ENCODE measurements at regions of chr1 and their contacts with region 1.

Region 1: GRCh38 chr1:226711976-226712741 is 26.9 kb downstream of the ITPKB start:
- DNase-seq: peak in 8 of 9 experiments; percentile 40 to 83 (median 67)
- ATAC-seq: peak; percentile 55
- H3K4me3 ChIP-seq: peak overlapping the region; percentile 21 to 36
- H3K4me3 Mint-ChIP-seq: peak overlapping the region; percentile 65
- H3K27ac ChIP-seq: peak overlapping the region; percentile 35 to 76
- H3K27ac Mint-ChIP-seq: peak overlapping the region; percentile 93
- H3K4me1 ChIP-seq: peaks cover 96% of the 10 kb centered on the region
- H3K4me1 Mint-ChIP-seq: peaks cover 98% of the 10 kb centered on the region
- H3K27me3 ChIP-seq: no peaks in the 10 kb centered on the region
- H3K27me3 Mint-ChIP-seq: no peaks in the 10 kb centered on the region
- CTCF ChIP-seq: no peak

Region 2: DNA sequence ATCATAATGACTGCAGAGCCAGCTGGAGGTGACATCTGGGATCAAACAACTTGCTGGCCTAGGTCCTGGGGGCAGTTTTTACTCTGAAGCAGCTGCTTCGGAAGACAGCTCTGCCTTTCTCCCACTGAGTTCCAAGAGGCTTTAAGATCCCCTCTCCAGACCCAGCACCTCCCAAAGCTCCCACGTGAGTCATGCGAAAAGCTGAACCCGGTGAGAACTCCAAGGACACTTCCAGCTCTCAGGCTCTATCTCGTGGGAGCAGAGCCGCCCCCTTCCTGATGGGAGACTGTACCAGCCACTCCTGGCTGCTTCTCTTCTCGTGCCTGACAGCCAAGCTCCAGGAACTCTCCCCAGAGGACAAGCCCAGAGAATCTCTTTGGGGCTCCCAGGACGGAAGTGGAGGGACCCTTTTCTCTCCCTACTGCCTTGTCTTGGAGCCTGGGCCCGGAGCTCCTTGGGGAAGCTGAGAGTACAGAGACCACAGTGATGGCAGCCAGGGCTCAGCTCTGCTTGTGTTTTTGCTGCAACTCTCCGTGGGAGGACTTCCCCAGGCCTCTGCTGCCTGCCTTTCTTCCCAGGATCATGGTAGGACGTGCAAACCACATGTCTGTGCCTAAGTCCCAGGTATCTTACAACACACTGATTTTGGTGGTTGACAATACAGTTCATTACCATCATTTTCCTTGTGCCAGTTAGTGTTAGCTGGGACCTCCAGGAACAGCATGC is 123.0 kb before region 1 on chr1:
- CTCF ChIA-PET with region 1: no interaction called
- POLR2A ChIA-PET with region 1: no interaction called
- intact Hi-C with region 1: no loop called
- DNase-seq: no peak
- ATAC-seq: no peak
- H3K4me3 ChIP-seq: no peak overlapping the region
- H3K4me3 Mint-ChIP-seq: no peak overlapping the region
- H3K27ac ChIP-seq: no peak overlapping the region
- H3K27ac Mint-ChIP-seq: no peak overlapping the region
- H3K4me1 ChIP-seq: no peaks in the 10 kb centered on the region
- H3K4me1 Mint-ChIP-seq: no peaks in the 10 kb centered on the region
- H3K27me3 ChIP-seq: no peaks in the 10 kb centered on the region
- H3K27me3 Mint-ChIP-seq: peaks cover 8% of the 10 kb centered on the region
- CTCF ChIP-seq: no peak

Region 3: DNA sequence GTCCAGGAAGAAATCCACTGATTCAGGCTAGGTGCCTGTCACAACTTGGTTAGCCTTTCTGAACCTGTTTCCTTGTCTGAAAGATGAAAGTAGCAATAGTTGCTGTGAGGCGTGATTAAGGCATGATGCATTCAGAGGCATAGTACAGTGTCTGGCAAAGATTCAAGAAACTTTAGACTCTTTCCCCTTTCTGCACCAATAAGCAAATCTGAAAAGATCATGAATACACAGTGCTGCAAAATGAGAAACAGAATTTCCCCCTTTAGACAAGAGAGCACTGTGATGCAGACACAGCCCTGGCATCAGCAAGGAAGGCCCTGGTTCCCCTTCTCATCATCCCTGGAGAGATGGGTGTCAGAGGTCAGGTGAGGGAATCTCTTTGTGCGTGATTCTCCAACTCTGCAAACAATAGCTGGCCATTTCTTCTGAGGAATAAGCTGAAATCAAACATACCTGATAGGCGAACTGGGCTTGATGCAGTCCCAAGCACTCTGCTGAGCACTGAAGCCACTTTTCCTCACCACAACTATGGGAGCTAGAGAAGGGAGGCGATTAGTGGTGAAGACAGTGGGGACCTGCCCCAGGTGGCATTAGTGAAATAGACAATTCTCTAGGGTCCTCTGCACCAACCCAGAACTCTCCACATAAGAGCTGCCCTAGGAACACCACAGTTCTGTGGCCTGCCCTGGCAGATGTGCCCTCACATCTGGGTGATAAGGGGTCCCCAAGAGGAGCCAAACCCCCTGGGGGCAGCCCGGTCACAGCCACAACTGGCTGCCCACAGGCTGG is 14.8 kb before region 1 on chr1:
- CTCF ChIA-PET with region 1: interaction called, 12 read pairs
- POLR2A ChIA-PET with region 1: interaction called, 3 read pairs
- intact Hi-C with region 1: loop called in 1 of 2 experiments (anchors 2 kb)
- DNase-seq: peak in 4 of 9 experiments; percentile 44 to 80 (median 52)
- ATAC-seq: peak; percentile 76
- H3K4me3 ChIP-seq: no peak overlapping the region
- H3K4me3 Mint-ChIP-seq: peak overlapping the region; percentile 59
- H3K27ac ChIP-seq: peak overlapping the region; percentile 29 to 57
- H3K27ac Mint-ChIP-seq: peak overlapping the region; percentile 98
- H3K4me1 ChIP-seq: peaks cover 97% of the 10 kb centered on the region
- H3K4me1 Mint-ChIP-seq: peaks cover 92% of the 10 kb centered on the region
- H3K27me3 ChIP-seq: no peaks in the 10 kb centered on the region
- H3K27me3 Mint-ChIP-seq: no peaks in the 10 kb centered on the region
- CTCF ChIP-seq: no peak

Region 4: DNA sequence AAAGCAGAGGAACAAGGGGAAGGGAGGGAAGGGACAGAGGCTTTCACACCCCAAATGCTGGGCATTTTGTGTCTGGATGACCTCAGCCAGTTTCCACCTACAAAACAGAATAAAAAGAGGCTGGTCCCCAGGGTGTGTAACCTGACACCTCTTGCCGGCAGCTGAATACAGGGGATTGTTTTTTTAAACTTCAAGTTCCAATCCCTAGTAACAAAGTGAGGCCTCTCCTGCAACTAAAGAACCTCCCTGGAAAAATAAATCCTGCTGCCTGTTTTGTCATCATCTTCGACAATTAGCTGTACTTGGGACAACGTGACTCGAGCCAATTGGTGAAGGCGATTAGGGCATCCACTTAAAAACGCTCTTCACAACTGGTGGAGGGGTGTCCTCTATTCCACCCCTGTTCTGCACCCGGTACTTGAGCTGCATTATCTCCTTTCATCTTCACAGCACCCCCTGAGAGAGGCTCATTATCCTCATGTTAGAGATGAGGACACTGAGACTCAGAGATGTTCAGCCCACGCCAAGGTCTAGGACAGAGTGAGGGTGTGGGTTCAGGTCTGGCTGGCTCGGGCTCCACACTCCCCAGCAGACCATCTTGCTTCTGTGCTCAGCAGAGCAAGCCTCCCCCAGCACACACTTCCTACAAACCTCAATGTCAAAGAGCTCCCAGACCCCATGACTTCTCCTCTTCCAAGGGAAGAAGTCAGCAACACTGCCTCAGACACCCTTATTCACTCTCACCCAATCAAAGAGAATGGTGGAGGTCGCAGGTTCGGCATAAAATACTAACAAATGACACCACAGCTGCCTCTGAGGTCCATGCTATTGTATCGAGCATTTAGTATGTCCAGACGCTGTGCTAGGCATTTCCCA is 11.7 kb after region 1 on chr1:
- CTCF ChIA-PET with region 1: interaction called, 12 read pairs
- POLR2A ChIA-PET with region 1: interaction called, 8 read pairs
- intact Hi-C with region 1: no loop called
- DNase-seq: peak in 3 of 9 experiments; percentile 8 to 34 (median 25)
- ATAC-seq: peak; percentile 20
- H3K4me3 ChIP-seq: peak overlapping the region; percentile 19 to 31
- H3K4me3 Mint-ChIP-seq: peak overlapping the region; percentile 80
- H3K27ac ChIP-seq: peak overlapping the region; percentile 25 to 66
- H3K27ac Mint-ChIP-seq: peak overlapping the region; percentile 94
- H3K4me1 ChIP-seq: peaks cover 96% of the 10 kb centered on the region
- H3K4me1 Mint-ChIP-seq: peaks cover 88% of the 10 kb centered on the region
- H3K27me3 ChIP-seq: no peaks in the 10 kb centered on the region
- H3K27me3 Mint-ChIP-seq: no peaks in the 10 kb centered on the region
- CTCF ChIP-seq: no peak

Region 5: GRCh38 chr1:226731257-226731893 is 19.2 kb after region 1 on chr1:
- CTCF ChIA-PET with region 1: interaction called, 14 read pairs
- POLR2A ChIA-PET with region 1: interaction called, 12 read pairs
- intact Hi-C with region 1: no loop called
- DNase-seq: peak in 1 of 9 experiments; percentile 45
- ATAC-seq: no peak
- H3K4me3 ChIP-seq: peak overlapping the region; percentile 34 to 99
- H3K4me3 Mint-ChIP-seq: peak overlapping the region; percentile 94
- H3K27ac ChIP-seq: peak overlapping the region; percentile 61 to 98
- H3K27ac Mint-ChIP-seq: peak overlapping the region; percentile 94
- H3K4me1 ChIP-seq: peaks cover 54% of the 10 kb centered on the region
- H3K4me1 Mint-ChIP-seq: peaks cover 77% of the 10 kb centered on the region
- H3K27me3 ChIP-seq: no peaks in the 10 kb centered on the region
- H3K27me3 Mint-ChIP-seq: no peaks in the 10 kb centered on the region
- CTCF ChIP-seq: no peak